Activated naive CD4-positive, alpha-beta T cell treated with anti-CD3 and anti-CD28 coated beads for 36 hours (primary cell): ENCODE measurements at regions of chr20 and their contacts with region 1.

Region 1: GRCh38 chr20:1844325-1845162 is 50.7 kb upstream of the SIRPA start:
- DNase-seq: peak; percentile 90
- H3K4me3 Mint-ChIP-seq: no peak overlapping the region
- H3K27ac Mint-ChIP-seq: peak overlapping the region; percentile 77
- H3K4me1 Mint-ChIP-seq: peaks cover 12% of the 10 kb centered on the region
- H3K27me3 Mint-ChIP-seq: peaks cover 5% of the 10 kb centered on the region

Region 2: DNA sequence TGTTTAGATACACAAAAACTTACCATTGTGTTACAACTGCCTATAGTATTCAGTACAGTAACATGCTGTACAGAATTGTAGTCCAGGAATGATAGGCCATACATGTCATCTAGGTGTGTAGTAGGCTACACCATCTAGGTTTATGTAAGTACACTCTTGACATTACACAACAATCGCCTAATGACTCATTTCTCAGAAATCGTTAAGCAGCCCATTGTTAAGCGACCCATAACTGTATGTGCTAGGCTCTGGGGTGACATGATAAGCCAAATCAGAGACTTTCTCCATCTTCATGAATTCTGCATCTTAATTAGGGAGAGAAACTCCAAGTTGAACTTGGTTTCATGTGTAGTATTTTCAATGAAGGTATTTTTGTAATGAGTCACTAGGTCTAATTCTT is 274.2 kb after region 1 on chr20:
- CTCF ChIA-PET with region 1: no interaction called
- intact Hi-C with region 1: loop called (anchors 2 kb)
- DNase-seq: peak; percentile 50
- H3K4me3 Mint-ChIP-seq: peak overlapping the region; percentile 41
- H3K27ac Mint-ChIP-seq: peak overlapping the region; percentile 94
- H3K4me1 Mint-ChIP-seq: peaks cover 86% of the 10 kb centered on the region
- H3K27me3 Mint-ChIP-seq: no peaks in the 10 kb centered on the region